ENCODE measurements at regions of chr17 and their contacts with region 1.

Region 1: GRCh38 chr17:8041249-8041928 is 2.5 kb downstream of the ALOX15B start:
- DNase-seq: peak; percentile 66
- H3K4me3 ChIP-seq: no peak overlapping the region
- H3K27ac ChIP-seq: no peak overlapping the region
- H3K4me1 ChIP-seq: no peaks in the 10 kb centered on the region
- H3K27me3 ChIP-seq: peaks cover 9 to 14% of the 10 kb centered on the region in 2 experiments
- CTCF ChIP-seq: peak; percentile 39 to 48
- POLR2A ChIP-seq: no peak

Region 2: DNA sequence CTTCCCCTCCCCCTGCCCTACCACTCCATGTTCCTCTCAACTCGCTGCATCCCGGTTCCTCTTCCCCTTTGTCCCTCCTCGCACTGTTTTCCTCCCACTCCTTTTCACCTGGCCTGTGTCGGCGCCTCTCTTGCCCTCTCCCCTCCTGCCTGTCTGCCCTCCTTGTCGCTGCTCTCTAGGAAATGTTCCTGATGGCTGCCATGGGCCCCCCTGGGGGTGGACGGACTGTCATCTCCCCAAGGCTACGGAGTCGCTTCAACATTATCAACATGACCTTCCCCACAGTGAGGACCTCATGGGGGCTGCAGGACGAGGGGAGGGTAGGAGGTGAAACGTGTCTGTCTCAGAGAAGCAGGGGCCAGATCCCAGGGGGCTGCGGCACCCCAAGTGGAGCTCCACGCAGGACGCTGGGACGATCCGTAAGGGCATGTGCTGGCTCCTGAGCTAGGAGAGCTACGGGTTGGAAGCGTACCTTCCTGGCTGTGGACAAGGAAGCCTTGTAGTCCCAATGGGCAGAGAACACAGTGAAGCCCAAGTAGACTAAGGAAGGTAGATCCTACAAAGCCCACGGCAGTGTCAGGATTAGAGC is 247.2 kb before region 1 on chr17:
- CTCF ChIA-PET with region 1: no interaction called
- POLR2A ChIA-PET with region 1: no interaction called
- dilution Hi-C with region 1: no loop called
- intact Hi-C with region 1: no loop called
- DNase-seq: no peak
- H3K4me3 ChIP-seq: no peak overlapping the region
- H3K27ac ChIP-seq: no peak overlapping the region
- H3K4me1 ChIP-seq: no peaks in the 10 kb centered on the region
- H3K27me3 ChIP-seq: peaks cover 0 to 2% of the 10 kb centered on the region in 2 experiments
- CTCF ChIP-seq: no peak
- POLR2A ChIP-seq: no peak

Region 3: GRCh38 chr17:7818746-7819645 is 222.4 kb before region 1 on chr17:
- CTCF ChIA-PET with region 1: interaction called, 20 read pairs
- POLR2A ChIA-PET with region 1: no interaction called
- dilution Hi-C with region 1: no loop called
- intact Hi-C with region 1: no loop called
- DNase-seq: no peak
- H3K4me3 ChIP-seq: no peak overlapping the region
- H3K27ac ChIP-seq: no peak overlapping the region
- H3K4me1 ChIP-seq: no peaks in the 10 kb centered on the region
- H3K27me3 ChIP-seq: peaks cover 9 to 13% of the 10 kb centered on the region in 2 experiments
- CTCF ChIP-seq: no peak
- POLR2A ChIP-seq: no peak

Region 4: GRCh38 chr17:7915611-7916382 is 125.6 kb before region 1 on chr17 and contains the start of gene RNF227:
- CTCF ChIA-PET with region 1: interaction called, 28 read pairs
- POLR2A ChIA-PET with region 1: interaction called, 8 read pairs
- dilution Hi-C with region 1: no loop called
- intact Hi-C with region 1: loop called (anchors 1 kb)
- DNase-seq: peak; percentile 98
- H3K4me3 ChIP-seq: peak within 1 kb of the TSS in 2 of 3 experiments; percentile 24 to 44
- H3K27ac ChIP-seq: peak within 1 kb of the TSS; percentile 19
- H3K4me1 ChIP-seq: peaks cover 16% of the 10 kb centered on the region
- H3K27me3 ChIP-seq: no peaks in the 10 kb centered on the region
- CTCF ChIP-seq: no peak
- POLR2A ChIP-seq: no peak
- total RNA-seq, gene RNF227: 0.58 TPM in 2 replicates

Region 5: GRCh38 chr17:7989781-7990655 is 51.4 kb before region 1 on chr17:
- CTCF ChIA-PET with region 1: interaction called, 26 read pairs
- POLR2A ChIA-PET with region 1: no interaction called
- dilution Hi-C with region 1: no loop called
- intact Hi-C with region 1: no loop called
- DNase-seq: peak; percentile 66
- H3K4me3 ChIP-seq: peak overlapping the region; percentile 45 to 53 (median 51)
- H3K27ac ChIP-seq: no peak overlapping the region
- H3K4me1 ChIP-seq: peaks cover 4% of the 10 kb centered on the region
- H3K27me3 ChIP-seq: peaks cover 3 to 12% of the 10 kb centered on the region in 2 experiments
- CTCF ChIP-seq: peak; percentile 93 to 98
- POLR2A ChIP-seq: no peak

Region 6: GRCh38 chr17:8022360-8023003 is 18.9 kb before region 1 on chr17:
- CTCF ChIA-PET with region 1: interaction called, 29 read pairs
- POLR2A ChIA-PET with region 1: no interaction called
- dilution Hi-C with region 1: no loop called
- intact Hi-C with region 1: no loop called
- DNase-seq: no peak
- H3K4me3 ChIP-seq: no peak overlapping the region
- H3K27ac ChIP-seq: no peak overlapping the region
- H3K4me1 ChIP-seq: no peaks in the 10 kb centered on the region
- H3K27me3 ChIP-seq: peaks cover 6 to 10% of the 10 kb centered on the region in 2 experiments
- CTCF ChIP-seq: no peak
- POLR2A ChIP-seq: no peak

Region 7: DNA sequence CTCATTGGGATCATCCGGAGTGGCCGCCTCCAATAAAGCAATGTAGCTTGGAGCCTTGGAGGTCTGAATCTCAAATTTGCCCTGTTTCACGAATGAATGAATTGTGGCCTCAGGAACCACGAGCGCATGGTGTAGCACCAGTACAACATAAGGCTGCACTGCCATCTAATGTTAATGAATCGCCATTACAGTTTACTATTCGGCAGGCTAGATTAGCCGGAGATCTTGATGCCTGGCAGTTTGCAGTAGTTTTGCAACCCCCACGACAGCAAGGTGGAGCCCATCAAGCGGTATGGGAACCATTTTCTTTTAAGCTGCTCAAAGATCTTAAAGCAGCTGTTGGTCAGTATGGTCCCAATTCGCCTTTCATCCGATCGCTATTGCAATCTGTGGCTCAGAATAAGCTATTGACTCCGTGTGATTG is 16.3 kb after region 1 on chr17:
- CTCF ChIA-PET with region 1: interaction called, 37 read pairs
- POLR2A ChIA-PET with region 1: no interaction called
- dilution Hi-C with region 1: no loop called
- intact Hi-C with region 1: no loop called
- DNase-seq: peak; percentile 76
- H3K4me3 ChIP-seq: no peak overlapping the region
- H3K27ac ChIP-seq: no peak overlapping the region
- H3K4me1 ChIP-seq: peaks cover 16% of the 10 kb centered on the region
- H3K27me3 ChIP-seq: peaks cover 28 to 38% of the 10 kb centered on the region in 2 experiments
- CTCF ChIP-seq: peak; percentile 63 to 70
- POLR2A ChIP-seq: no peak

Region 8: GRCh38 chr17:8436169-8436843 is 394.9 kb after region 1 on chr17:
- CTCF ChIA-PET with region 1: no interaction called
- POLR2A ChIA-PET with region 1: no interaction called
- dilution Hi-C with region 1: no loop called
- intact Hi-C with region 1: no loop called
- DNase-seq: peak; percentile 66
- H3K4me3 ChIP-seq: peak overlapping the region; percentile 77 to 97 (median 93)
- H3K27ac ChIP-seq: peak overlapping the region; percentile 86
- H3K4me1 ChIP-seq: peaks cover 17% of the 10 kb centered on the region
- H3K27me3 ChIP-seq: no peaks in the 10 kb centered on the region
- CTCF ChIP-seq: no peak
- POLR2A ChIP-seq: no peak